B cell (primary cell): ENCODE measurements at regions of chr1 and their contacts with region 1.

Region 1: GRCh38 chr1:52927212-52928014 is at the start of gene SCP2:
- DNase-seq: peak; percentile 72
- ATAC-seq: peak; percentile 86
- H3K4me3 ChIP-seq: peak within 1 kb of the TSS; percentile 59 to 85 (median 82)
- H3K4me3 Mint-ChIP-seq: peak within 1 kb of the TSS; percentile 89
- H3K27ac ChIP-seq: peak within 1 kb of the TSS in 1 of 2 donors; percentile 61
- H3K27ac Mint-ChIP-seq: peak within 1 kb of the TSS; percentile 22
- H3K4me1 ChIP-seq: peaks cover 10 to 19% of the 10 kb centered on the region in 2 donors
- H3K4me1 Mint-ChIP-seq: peaks cover 19% of the 10 kb centered on the region
- H3K27me3 ChIP-seq: peaks cover 0 to 20% (median 7%) of the 10 kb centered on the region in 4 experiments
- H3K27me3 Mint-ChIP-seq: peaks cover 12% of the 10 kb centered on the region
- CTCF ChIP-seq: no peak
- total RNA-seq, gene SCP2: 45.0 and 46.6 TPM in 2 replicates

Region 2: DNA sequence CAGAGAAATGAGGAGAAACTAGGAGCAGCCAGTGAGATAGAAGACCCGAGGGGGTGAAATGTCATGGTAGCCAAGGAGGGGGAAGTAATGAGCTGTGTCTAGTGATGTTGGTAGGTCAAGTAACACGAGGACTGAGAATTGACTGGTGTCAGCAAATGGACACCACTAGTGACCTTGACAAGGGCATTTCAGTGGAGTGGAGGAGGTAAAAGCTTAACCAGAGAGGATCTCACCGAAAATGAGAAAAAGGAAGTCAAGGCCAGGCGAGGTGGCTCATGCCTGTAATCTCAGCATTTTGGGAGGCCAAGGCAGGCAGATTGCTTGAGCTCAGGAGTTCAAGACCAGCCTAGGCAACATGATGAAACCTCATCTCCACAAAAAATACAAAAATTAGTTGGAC is 204.2 kb before region 1 on chr1:
- CTCF ChIA-PET with region 1: no interaction called
- POLR2A ChIA-PET with region 1: no interaction called
- intact Hi-C with region 1: no loop called
- DNase-seq: no peak
- ATAC-seq: no peak
- H3K4me3 ChIP-seq: no peak overlapping the region
- H3K4me3 Mint-ChIP-seq: no peak overlapping the region
- H3K27ac ChIP-seq: no peak overlapping the region
- H3K27ac Mint-ChIP-seq: no peak overlapping the region
- H3K4me1 ChIP-seq: peaks cover 8 to 12% of the 10 kb centered on the region in 2 donors
- H3K4me1 Mint-ChIP-seq: peaks cover 27% of the 10 kb centered on the region
- H3K27me3 ChIP-seq: no peaks in the 10 kb centered on the region
- H3K27me3 Mint-ChIP-seq: peaks cover 7% of the 10 kb centered on the region
- CTCF ChIP-seq: no peak

Region 3: DNA sequence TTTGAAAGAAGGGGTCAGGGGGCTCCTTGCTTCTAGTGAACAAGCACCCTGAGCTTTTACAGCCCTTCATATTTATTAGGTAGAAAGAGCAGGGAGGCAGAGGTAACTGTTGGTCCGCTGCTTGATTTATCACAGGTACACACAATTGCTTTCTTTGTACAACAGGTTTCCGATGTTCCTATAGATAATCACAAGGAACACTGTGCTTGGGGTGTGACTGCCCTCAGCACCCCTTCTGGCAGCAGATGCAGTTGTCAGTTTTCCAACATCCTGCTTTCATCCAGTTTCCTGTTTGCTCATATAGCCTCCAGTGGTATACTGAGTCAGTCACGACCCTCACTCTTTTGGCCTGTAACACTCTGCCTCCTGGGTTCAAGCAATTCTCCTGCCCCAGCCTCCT is 40.3 kb after region 1 on chr1:
- CTCF ChIA-PET with region 1: no interaction called
- POLR2A ChIA-PET with region 1: no interaction called
- intact Hi-C with region 1: no loop called
- DNase-seq: no peak
- ATAC-seq: no peak
- H3K4me3 ChIP-seq: no peak overlapping the region
- H3K4me3 Mint-ChIP-seq: no peak overlapping the region
- H3K27ac ChIP-seq: no peak overlapping the region
- H3K27ac Mint-ChIP-seq: no peak overlapping the region
- H3K4me1 ChIP-seq: no peaks in the 10 kb centered on the region
- H3K4me1 Mint-ChIP-seq: no peaks in the 10 kb centered on the region
- H3K27me3 ChIP-seq: no peaks in the 10 kb centered on the region
- H3K27me3 Mint-ChIP-seq: no peaks in the 10 kb centered on the region
- CTCF ChIP-seq: no peak

Region 4: DNA sequence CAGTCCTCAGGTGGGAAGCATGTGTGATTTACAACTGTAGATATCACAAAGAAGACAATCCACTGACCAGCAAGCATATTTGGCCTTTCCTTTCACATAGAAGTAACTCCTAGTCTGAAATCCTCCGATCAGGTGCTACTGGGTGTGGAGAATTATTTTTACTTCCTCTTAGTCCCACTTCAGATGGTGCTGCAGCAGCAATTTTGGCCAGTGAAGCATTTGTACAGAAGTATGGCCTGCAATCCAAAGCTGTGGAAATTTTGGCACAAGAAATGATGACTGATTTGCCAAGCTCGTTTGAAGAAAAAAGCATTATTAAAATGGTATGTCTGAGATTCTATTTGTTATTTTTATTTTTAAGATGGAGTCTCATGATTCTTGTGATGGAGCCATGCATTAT is 50.6 kb after region 1 on chr1:
- CTCF ChIA-PET with region 1: no interaction called
- POLR2A ChIA-PET with region 1: no interaction called
- intact Hi-C with region 1: no loop called
- DNase-seq: no peak
- ATAC-seq: no peak
- H3K4me3 ChIP-seq: no peak overlapping the region
- H3K4me3 Mint-ChIP-seq: no peak overlapping the region
- H3K27ac ChIP-seq: no peak overlapping the region
- H3K27ac Mint-ChIP-seq: no peak overlapping the region
- H3K4me1 ChIP-seq: no peaks in the 10 kb centered on the region
- H3K4me1 Mint-ChIP-seq: no peaks in the 10 kb centered on the region
- H3K27me3 ChIP-seq: no peaks in the 10 kb centered on the region
- H3K27me3 Mint-ChIP-seq: no peaks in the 10 kb centered on the region
- CTCF ChIP-seq: no peak

Region 5: DNA sequence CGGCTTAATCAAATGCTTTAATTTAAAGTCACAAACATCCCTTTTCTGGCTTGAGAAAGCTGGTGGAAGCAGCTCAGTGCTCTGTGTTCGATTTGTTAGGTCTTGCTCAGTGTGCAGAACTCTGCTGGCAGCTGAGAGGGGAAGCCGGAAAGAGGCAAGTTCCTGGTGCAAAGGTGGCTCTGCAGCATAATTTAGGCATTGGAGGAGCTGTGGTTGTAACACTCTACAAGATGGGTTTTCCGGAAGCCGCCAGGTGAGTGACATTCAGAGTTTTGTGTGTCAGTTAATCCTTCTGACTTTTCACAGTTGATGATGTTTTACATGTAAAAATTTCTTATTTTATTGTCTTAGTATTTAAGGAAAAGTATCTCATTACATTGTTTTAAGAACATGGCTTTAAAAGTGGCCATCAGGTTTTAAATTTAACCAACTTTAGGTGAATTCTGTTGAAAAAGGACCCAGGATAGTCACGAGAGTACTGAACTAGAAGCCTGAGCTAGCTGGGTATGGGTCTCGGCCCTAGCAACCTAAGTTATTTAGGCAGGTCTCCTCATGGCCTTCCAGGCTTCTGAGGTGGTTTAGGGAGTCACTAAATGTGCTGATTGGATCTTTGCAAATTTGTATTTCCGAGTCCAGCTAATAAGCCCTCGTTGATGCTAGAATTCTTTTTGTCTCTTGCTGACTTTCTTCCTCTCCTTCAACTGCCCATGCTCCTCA is 87.5 kb after region 1 on chr1:
- CTCF ChIA-PET with region 1: no interaction called
- POLR2A ChIA-PET with region 1: no interaction called
- intact Hi-C with region 1: loop called (anchors 10 kb)
- DNase-seq: peak; percentile 86
- ATAC-seq: peak; percentile 96
- H3K4me3 ChIP-seq: peak overlapping the region; percentile 45 to 88 (median 62)
- H3K4me3 Mint-ChIP-seq: peak overlapping the region; percentile 87
- H3K27ac ChIP-seq: peak overlapping the region in 1 of 2 donors; percentile 13
- H3K27ac Mint-ChIP-seq: peak overlapping the region; percentile 62
- H3K4me1 ChIP-seq: peaks cover 19 to 20% of the 10 kb centered on the region in 2 donors
- H3K4me1 Mint-ChIP-seq: peaks cover 27% of the 10 kb centered on the region
- H3K27me3 ChIP-seq: no peaks in the 10 kb centered on the region
- H3K27me3 Mint-ChIP-seq: no peaks in the 10 kb centered on the region
- CTCF ChIP-seq: no peak